Psoas muscle (tissue), 8 donors: ENCODE measurements at regions of chr22 and their contacts with region 1.

Region 1: GRCh38 chr22:18070556-18071306 is 7.1 kb upstream of the PEX26 start:
- DNase-seq: no peak
- ATAC-seq: no peak
- H3K4me3 ChIP-seq: no peak overlapping the region
- H3K27ac ChIP-seq: no peak overlapping the region
- H3K4me1 ChIP-seq: peaks cover 24% of the 10 kb centered on the region
- H3K27me3 ChIP-seq: no peaks in the 10 kb centered on the region
- CTCF ChIP-seq: peak; percentile 15

Region 2: DNA sequence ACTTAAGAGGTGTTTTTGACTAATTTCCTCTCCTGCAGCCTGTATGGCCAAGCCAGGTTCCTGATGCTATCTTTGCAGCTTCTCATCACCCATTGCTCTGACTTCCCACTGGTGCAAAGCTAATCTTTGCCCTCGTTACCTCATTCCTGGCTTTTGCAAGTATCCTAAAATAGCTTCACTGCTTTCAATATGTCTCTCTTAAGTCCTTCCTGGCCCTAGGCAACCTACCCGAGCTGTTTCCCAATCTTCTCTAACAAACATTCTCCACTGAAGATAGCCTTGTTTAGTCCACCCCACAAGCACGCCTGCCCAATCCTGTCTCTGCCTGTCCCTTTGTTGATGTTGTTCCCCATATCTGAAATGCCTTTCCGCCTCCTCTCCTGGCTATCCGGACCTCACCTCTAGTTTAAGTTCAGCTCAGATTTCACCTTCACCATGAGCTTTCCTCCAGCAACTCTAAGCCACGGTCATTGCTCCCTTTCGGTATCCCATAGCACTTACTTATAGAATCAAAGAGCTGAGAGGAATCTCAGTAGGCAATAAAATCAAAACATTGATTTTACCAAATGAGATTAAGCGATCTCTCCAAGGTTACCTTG is 731.5 kb before region 1 on chr22:
- intact Hi-C with region 1: no loop called
- DNase-seq: peak; percentile 15 to 59
- ATAC-seq: peak; percentile 91 to 98 (median 96)
- H3K4me3 ChIP-seq: peak overlapping the region; percentile 39
- H3K27ac ChIP-seq: peak overlapping the region; percentile 84
- H3K4me1 ChIP-seq: peaks cover 13% of the 10 kb centered on the region
- H3K27me3 ChIP-seq: no peaks in the 10 kb centered on the region
- CTCF ChIP-seq: no peak

Region 3: GRCh38 chr22:17897858-17898257 is 172.9 kb before region 1 on chr22:
- intact Hi-C with region 1: loop called in 1 of 2 experiments (anchors 5 kb)
- DNase-seq: no peak
- ATAC-seq: no peak
- H3K4me3 ChIP-seq: no peak overlapping the region
- H3K27ac ChIP-seq: peak overlapping the region; percentile 73
- H3K4me1 ChIP-seq: peaks cover 6% of the 10 kb centered on the region
- H3K27me3 ChIP-seq: no peaks in the 10 kb centered on the region
- CTCF ChIP-seq: no peak

Region 4: GRCh38 chr22:18031695-18032454 is 38.9 kb before region 1 on chr22:
- intact Hi-C with region 1: loop called (anchors 5 kb)
- DNase-seq: peak; percentile 63 to 89
- ATAC-seq: peak; percentile 69 to 72 (median 70)
- H3K4me3 ChIP-seq: no peak overlapping the region
- H3K27ac ChIP-seq: peak overlapping the region; percentile 79
- H3K4me1 ChIP-seq: peaks cover 42% of the 10 kb centered on the region
- H3K27me3 ChIP-seq: no peaks in the 10 kb centered on the region
- CTCF ChIP-seq: no peak

Region 5: DNA sequence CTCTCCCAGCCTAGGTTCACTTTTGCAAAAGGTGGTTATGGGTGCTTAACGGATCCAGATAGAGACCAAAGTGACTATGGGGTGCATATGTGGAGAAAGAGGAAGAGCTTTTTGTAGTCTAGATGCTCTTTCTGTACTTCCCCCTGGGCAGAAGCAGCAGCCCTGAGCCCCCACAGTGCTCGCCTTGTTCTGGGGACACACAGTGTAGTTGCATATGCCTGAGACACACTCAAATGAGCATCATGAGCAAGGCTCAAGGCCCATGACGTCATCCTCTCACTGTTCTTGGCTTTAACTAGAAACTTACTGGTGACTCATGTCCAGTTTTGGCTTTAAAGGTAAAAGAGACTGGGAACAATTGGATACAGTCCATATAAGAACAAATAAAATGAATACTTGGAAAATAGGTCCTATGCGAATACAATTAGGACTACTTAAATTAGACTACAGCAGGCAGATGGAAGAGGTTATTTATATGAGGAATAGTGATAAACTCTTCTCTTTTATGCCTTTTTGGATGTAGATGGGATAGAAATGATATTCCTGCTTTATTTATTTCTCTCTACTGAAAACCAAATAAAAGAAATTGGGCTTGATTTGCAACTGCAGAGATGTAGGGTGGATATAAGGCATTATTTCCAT is 13.0 kb before region 1 on chr22:
- intact Hi-C with region 1: no loop called
- DNase-seq: peak; percentile 71 to 80
- ATAC-seq: peak; percentile 71 to 84 (median 76)
- H3K4me3 ChIP-seq: peak overlapping the region; percentile 13
- H3K27ac ChIP-seq: peak overlapping the region; percentile 84
- H3K4me1 ChIP-seq: peaks cover 32% of the 10 kb centered on the region
- H3K27me3 ChIP-seq: no peaks in the 10 kb centered on the region
- CTCF ChIP-seq: no peak